Endothelial cell of umbilical vein (primary cell): ENCODE measurements at regions of chr3 and their contacts with region 1.

Region 1: DNA sequence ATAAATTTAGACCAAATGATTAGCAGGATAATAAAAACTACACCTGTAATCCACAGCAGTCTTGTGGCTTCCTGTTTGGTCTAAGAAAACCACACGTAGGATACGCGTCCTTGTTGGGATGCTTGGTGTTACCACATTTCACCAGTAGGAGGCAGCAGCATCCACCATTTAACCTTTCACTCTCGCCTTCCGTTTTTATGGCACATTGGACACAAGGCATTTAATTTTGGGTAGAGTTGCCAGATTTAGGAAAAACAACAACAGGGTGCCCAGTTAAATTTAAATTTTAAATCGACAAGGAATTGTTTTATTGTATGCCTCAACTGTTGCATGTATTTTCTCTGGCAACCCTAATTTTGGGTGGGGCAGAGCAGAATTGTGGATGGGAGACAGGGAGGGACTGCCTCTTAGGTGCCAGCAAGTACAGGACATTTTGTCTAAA is 6.3 kb downstream of the LRRC31 start:
- DNase-seq: peak; percentile 81
- H3K4me3 ChIP-seq: no peak overlapping the region
- H3K27ac ChIP-seq: no peak overlapping the region
- H3K4me1 ChIP-seq: no peaks in the 10 kb centered on the region
- H3K27me3 ChIP-seq: peaks cover 0 to 2% of the 10 kb centered on the region in 2 experiments
- CTCF ChIP-seq: peak; percentile 81 to 86
- POLR2A ChIP-seq: no peak

Region 2: DNA sequence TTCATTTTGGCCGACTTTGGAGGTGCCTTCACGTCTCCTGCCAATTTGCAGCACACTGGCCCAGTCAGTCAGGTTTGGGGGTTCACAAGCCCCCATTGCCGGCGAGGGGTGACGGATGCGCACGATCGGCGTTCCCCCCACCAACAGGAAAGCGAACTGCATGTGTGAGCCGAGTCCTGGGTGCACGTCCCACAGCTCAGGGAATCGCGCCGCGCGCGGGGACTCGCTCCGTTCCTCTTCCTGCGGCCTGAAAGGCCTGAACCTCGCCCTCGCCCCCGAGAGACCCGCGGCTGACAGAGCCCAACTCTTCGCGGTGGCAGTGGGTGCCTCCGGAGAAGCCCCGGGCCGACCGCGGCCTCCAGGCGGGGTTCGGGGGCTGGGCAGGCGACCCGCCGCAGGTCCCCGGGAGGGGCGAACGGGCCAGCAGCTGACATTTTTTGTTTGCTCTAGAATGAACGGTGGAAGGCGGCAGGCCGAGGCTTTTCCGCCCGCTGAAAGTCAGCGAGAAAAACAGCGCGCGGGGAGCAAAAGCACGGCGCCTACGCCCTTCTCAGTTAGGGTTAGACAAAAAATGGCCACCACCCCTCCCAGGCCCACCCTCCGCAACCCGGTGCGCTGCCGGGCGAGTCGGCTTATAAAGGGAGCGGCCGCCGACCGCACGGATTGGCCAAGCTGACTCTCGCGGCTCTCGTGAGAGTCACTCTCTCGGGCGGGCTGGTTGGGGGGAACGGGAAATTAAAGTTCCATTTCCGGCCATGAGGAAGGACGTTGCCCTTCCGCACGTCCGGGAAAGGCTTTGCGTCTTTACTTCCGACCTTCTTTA is 98.8 kb before region 1 on chr3 and contains the start of gene TERC:
- CTCF ChIA-PET with region 1: no interaction called
- POLR2A ChIA-PET with region 1: no interaction called
- dilution Hi-C with region 1: no loop called
- intact Hi-C with region 1: loop called (anchors 2 kb)
- DNase-seq: peak; percentile 77
- H3K4me3 ChIP-seq: peak within 1 kb of the TSS; percentile 36 to 53 (median 41)
- H3K27ac ChIP-seq: peak within 1 kb of the TSS; percentile 31
- H3K4me1 ChIP-seq: peaks cover 8% of the 10 kb centered on the region
- H3K27me3 ChIP-seq: no peaks in the 10 kb centered on the region
- CTCF ChIP-seq: no peak
- POLR2A ChIP-seq: peak; percentile 77
- total RNA-seq, gene TERC: 6.1 and 10.0 TPM in 2 replicates

Region 3: DNA sequence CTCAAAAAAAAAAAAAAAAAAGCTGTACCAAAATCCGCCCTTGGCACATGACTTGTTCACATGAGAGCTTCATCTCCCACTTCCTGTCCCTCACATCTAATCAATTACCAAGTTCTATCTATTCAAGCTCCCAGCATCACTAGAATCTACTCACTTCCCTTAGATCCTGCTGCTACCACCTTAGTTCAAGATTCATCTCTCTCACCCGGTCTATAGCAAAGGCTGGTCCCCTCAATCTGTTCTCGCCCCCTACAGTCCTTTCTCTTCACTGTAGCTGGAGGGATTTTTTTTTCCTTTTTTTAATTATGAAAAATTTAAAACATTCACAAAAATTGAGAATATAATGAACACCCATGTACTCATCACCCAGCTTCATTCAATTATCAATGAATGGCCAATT is 157.6 kb after region 1 on chr3:
- CTCF ChIA-PET with region 1: interaction called, 18 read pairs
- POLR2A ChIA-PET with region 1: no interaction called
- dilution Hi-C with region 1: no loop called
- intact Hi-C with region 1: loop called (anchors 1 kb)
- DNase-seq: no peak
- H3K4me3 ChIP-seq: no peak overlapping the region
- H3K27ac ChIP-seq: no peak overlapping the region
- H3K4me1 ChIP-seq: no peaks in the 10 kb centered on the region
- H3K27me3 ChIP-seq: peaks cover 11 to 13% of the 10 kb centered on the region in 2 experiments
- CTCF ChIP-seq: peak in 1 of 2 donors; percentile 28
- POLR2A ChIP-seq: no peak

Region 4: GRCh38 chr3:170054204-170054603 is 190.7 kb after region 1 on chr3:
- CTCF ChIA-PET with region 1: interaction called, 18 read pairs
- POLR2A ChIA-PET with region 1: no interaction called
- dilution Hi-C with region 1: no loop called
- intact Hi-C with region 1: loop called (anchors 1 kb)
- DNase-seq: peak; percentile 25
- H3K4me3 ChIP-seq: no peak overlapping the region
- H3K27ac ChIP-seq: no peak overlapping the region
- H3K4me1 ChIP-seq: peaks cover 5% of the 10 kb centered on the region
- H3K27me3 ChIP-seq: no peaks in the 10 kb centered on the region
- CTCF ChIP-seq: peak; percentile 14 to 28
- POLR2A ChIP-seq: no peak

Region 5: GRCh38 chr3:170368921-170369320 is 505.4 kb after region 1 on chr3:
- CTCF ChIA-PET with region 1: no interaction called
- POLR2A ChIA-PET with region 1: no interaction called
- dilution Hi-C with region 1: no loop called
- intact Hi-C with region 1: loop called (anchors 10 kb)
- DNase-seq: no peak
- H3K4me3 ChIP-seq: no peak overlapping the region
- H3K27ac ChIP-seq: no peak overlapping the region
- H3K4me1 ChIP-seq: peaks cover 44% of the 10 kb centered on the region
- H3K27me3 ChIP-seq: no peaks in the 10 kb centered on the region
- CTCF ChIP-seq: peak; percentile 13 to 16
- POLR2A ChIP-seq: no peak